ENCODE measurements at regions of chr9 and their contacts with region 1.

Region 1: GRCh38 chr9:37485389-37486219 is at the start of gene POLR1E:
- ATAC-seq: peak; percentile 85 to 96 (median 94)
- H3K4me3 ChIP-seq: peak within 1 kb of the TSS; percentile 49 to 65 (median 57)
- H3K27ac ChIP-seq: peak within 1 kb of the TSS in 1 of 2 donors; percentile 2
- H3K4me1 ChIP-seq: peaks cover 11 to 13% of the 10 kb centered on the region in 2 donors
- total RNA-seq, gene POLR1E: 19.4 to 35.4 (median 24.9) TPM

Region 2: GRCh38 chr9:37085233-37085632 is 400.4 kb before region 1 on chr9:
- in situ Hi-C with region 1: no loop called
- ATAC-seq: no peak
- H3K4me3 ChIP-seq: no peak overlapping the region
- H3K27ac ChIP-seq: no peak overlapping the region
- H3K4me1 ChIP-seq: peaks cover 0 to 17% of the 10 kb centered on the region in 2 donors

Region 3: GRCh38 chr9:37732086-37732741 is 246.6 kb after region 1 on chr9:
- in situ Hi-C with region 1: no loop called
- ATAC-seq: peak in 1 of 8 experiments; percentile 19
- H3K4me3 ChIP-seq: no peak overlapping the region
- H3K27ac ChIP-seq: no peak overlapping the region
- H3K4me1 ChIP-seq: peaks cover 0 to 4% of the 10 kb centered on the region in 2 donors

Region 4: GRCh38 chr9:37784616-37785483 is 299.2 kb after region 1 on chr9 and contains the start of gene EXOSC3:
- in situ Hi-C with region 1: loop called in 1 of 9 experiments (anchors 25 kb)
- ATAC-seq: peak; percentile 91 to 98 (median 96)
- H3K4me3 ChIP-seq: peak within 1 kb of the TSS; percentile 79 to 89 (median 82)
- H3K27ac ChIP-seq: peak within 1 kb of the TSS; percentile 76 to 90
- H3K4me1 ChIP-seq: peaks cover 7 to 17% of the 10 kb centered on the region in 2 donors
- total RNA-seq, gene EXOSC3: 24.7 to 57.2 (median 43.2) TPM